Mammary epithelial cell (primary cell): ENCODE measurements at regions of chr22 and their contacts with region 1.

Region 1: GRCh38 chr22:42277988-42278776 is 7.7 kb upstream of the TCF20 start:
- DNase-seq: no peak
- H3K4me3 ChIP-seq: no peak overlapping the region
- H3K27ac ChIP-seq: no peak overlapping the region
- H3K4me1 ChIP-seq: no peaks in the 10 kb centered on the region
- H3K27me3 ChIP-seq: no peaks in the 10 kb centered on the region
- CTCF ChIP-seq: peak in 1 of 2 donors; percentile 30

Region 2: DNA sequence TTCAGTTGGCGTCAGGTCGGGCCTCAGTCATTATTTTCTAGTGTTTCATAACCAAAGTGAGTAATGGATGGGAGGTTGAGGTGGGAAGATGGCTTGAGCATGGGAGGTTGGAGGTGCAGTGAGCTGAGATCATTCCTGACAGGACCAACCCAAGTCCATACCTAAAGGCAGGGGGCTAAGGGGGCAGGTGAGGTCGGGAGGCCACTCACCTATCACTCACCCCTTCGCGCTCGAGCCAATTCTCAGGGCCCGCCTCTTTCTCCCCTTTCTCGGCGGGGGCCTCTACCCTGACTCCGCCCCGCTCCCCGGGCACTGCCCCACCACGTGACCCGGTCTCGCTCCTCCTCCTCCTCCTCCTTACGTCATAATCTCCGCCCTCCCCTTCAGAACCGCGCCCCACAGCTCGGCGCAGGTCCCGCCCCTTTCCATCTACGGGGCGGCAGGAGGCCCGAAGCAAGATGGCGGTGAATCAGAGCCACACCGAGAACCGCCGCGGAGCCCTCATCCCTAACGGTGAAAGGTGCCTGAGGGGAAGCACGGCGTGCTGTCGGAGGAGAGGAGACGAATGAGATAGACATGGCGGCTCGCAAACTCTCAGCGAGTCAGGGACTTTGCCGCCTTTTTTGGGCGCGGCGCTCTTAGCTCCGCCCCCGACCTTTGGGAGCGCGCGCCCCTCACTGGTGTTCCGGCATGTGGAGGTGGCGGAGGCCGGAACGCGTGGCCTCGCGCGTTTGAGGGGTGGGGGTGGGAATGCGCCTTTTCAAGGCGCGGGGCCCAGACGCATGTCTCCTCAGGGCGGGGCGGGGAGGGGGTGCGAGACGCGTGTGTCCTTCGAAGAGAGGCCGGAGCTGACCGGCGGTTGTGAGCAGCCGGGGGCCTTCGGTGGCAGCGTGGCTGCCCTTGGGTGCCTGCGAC is 279.6 kb before region 1 on chr22 and contains the start of gene WBP2NL:
- CTCF ChIA-PET with region 1: no interaction called
- dilution Hi-C with region 1: no loop called
- in situ Hi-C with region 1: no loop called
- intact Hi-C with region 1: no loop called
- DNase-seq: peak; percentile 75
- H3K4me3 ChIP-seq: peak within 1 kb of the TSS; percentile 4 to 49 (median 34)
- H3K27ac ChIP-seq: no peak within 1 kb of the TSS
- H3K4me1 ChIP-seq: no peaks in the 10 kb centered on the region
- H3K27me3 ChIP-seq: no peaks in the 10 kb centered on the region
- CTCF ChIP-seq: no peak
- total RNA-seq, gene WBP2NL: 0.19 to 0.33 TPM

Region 3: DNA sequence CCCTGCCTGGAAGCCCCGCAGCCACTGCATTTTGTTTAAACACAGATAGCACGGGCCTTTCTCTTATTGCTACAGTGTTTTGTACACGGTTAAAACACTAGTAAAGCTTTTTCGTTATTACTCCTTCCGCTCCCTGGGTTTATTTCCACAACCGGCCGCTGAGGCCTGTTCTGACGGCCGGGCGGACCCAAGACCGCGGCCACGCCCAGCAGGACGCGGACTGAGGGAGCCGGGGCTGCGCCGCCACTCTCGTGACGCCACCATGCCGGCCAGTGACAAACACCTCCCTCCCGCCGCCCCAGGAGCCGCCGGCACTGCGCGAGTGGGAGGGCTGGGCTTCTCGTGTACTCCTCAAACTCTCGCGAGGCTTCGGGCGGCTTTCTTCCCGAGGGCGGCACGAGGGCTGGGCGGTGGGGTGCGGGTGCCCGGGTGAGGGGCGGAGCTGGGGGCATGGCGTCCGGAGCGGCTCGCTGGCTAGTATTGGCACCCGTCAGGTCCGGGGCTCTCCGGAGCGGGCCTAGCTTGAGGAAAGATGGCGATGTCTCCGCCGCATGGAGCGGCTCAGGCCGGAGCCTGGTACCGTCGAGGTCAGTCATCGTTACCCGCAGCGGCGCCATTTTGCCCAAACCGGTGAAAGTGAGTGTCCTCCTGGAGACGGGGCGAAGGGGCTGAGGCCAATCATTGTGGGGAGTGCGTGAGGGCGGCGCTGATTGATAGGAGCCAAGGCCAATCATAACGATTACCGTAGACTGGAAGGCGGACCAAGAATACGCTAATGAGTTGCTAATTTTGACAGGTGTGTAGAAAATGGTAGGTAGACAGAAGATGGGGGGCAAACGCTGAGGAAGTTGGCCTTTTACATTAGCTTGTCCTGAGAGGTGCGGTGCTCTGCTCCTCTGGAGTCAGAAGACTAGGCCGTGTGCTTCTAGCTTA is 198.6 kb before region 1 on chr22 and contains the start of gene SMDT1:
- CTCF ChIA-PET with region 1: no interaction called
- dilution Hi-C with region 1: no loop called
- in situ Hi-C with region 1: no loop called
- intact Hi-C with region 1: no loop called
- DNase-seq: peak; percentile 97
- H3K4me3 ChIP-seq: peak within 1 kb of the TSS; percentile 68 to 92 (median 76)
- H3K27ac ChIP-seq: peak within 1 kb of the TSS; percentile 85
- H3K4me1 ChIP-seq: peaks cover 16% of the 10 kb centered on the region
- H3K27me3 ChIP-seq: no peaks in the 10 kb centered on the region
- CTCF ChIP-seq: no peak
- total RNA-seq, gene SMDT1: 2.7 to 47.1 TPM

Region 4: GRCh38 chr22:42331014-42331413 is 52.8 kb after region 1 on chr22:
- CTCF ChIA-PET with region 1: no interaction called
- dilution Hi-C with region 1: loop called (anchors 5 kb)
- in situ Hi-C with region 1: no loop called
- intact Hi-C with region 1: no loop called
- DNase-seq: no peak
- H3K4me3 ChIP-seq: no peak overlapping the region
- H3K27ac ChIP-seq: no peak overlapping the region
- H3K4me1 ChIP-seq: peaks cover 9% of the 10 kb centered on the region
- H3K27me3 ChIP-seq: no peaks in the 10 kb centered on the region
- CTCF ChIP-seq: no peak